PC-9 (cell line): ENCODE measurements at regions of chr14 and their contacts with region 1.

Region 1: DNA sequence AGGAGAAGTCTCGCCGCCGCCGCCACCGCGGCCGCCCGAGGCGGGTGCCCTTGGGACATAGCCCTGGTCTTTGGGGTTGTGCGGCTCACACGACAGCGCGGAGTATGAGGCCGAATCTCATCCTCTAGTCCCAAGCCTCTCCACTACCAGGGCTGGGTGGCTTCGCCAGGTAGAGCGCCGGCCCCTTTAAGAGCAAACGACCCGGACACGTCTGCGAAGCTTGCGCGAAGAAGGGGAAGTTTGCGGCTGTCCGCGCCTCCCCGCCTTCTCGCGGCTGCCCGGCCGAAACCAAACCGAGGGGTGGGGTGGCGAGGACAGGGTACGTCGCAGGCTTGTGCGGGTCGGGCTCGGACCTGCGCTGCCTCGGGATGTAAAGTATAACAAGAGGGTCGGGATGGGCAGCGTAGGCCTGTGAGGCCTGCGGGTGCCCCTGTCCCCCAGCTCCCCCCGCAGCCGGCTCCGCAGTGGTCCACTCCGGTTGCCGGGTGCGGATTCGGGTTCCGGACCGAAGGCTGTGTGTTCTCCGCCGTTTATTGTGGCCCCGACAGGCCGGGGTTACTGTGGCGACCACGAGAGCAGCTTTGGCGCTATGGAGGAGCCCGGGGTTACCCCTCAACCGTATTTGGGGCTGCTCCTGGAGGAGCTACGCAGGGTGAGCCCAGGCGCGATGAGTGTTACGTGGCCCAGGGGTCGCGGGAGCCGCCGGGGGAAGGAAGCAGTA is 33.3 kb downstream of the MIA2 start:
- DNase-seq: peak; percentile 46 to 68
- H3K4me3 ChIP-seq: peak overlapping the region; percentile 84
- H3K27ac ChIP-seq: peak overlapping the region; percentile 92
- H3K4me1 ChIP-seq: peaks cover 21% of the 10 kb centered on the region
- H3K27me3 ChIP-seq: no peaks in the 10 kb centered on the region
- CTCF ChIP-seq: no peak

Region 2: DNA sequence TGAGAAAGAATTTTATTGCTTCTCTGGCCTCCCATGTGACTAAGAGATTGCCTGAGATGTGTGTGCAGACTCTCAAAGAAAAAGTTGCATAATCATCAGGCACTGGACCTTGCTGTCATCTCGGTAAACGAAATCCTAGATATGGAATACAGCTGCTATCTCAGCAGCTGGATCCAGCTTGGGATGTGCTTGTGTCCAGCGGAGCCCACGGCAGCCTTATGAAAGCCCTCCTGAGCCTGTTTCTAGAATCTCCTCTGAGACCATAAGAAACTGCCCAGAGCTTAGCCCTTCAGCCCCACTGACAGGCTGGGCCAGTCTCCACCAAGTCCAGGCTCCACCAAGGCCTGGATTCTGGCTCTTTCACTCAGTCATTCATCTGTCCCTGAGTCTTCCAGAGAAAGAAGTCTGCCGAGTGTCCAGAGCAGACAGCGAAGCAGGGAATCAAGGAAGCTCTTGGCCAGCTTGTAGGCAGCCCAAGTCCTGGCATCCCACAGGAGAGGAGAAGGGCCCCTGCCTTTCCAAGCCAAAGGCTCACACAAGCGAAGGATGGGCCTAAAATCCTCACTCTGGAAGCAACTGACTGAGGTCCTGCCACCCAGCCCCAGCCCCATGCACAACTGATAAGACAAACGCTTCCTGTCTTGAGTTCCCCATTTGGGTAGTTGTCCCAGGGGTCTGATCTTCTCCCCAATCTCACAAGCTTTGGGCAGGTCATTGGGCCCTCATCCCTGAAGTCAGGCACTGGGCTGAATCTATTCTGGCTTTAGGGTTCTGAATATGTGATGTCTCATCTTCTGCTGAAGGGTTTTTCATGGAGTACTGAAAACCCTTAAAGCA is 261.8 kb before region 1 on chr14:
- CTCF ChIA-PET with region 1: no interaction called
- POLR2A ChIA-PET with region 1: no interaction called
- intact Hi-C with region 1: no loop called
- DNase-seq: no peak
- H3K4me3 ChIP-seq: no peak overlapping the region
- H3K27ac ChIP-seq: no peak overlapping the region
- H3K4me1 ChIP-seq: no peaks in the 10 kb centered on the region
- H3K27me3 ChIP-seq: no peaks in the 10 kb centered on the region
- CTCF ChIP-seq: no peak

Region 3: DNA sequence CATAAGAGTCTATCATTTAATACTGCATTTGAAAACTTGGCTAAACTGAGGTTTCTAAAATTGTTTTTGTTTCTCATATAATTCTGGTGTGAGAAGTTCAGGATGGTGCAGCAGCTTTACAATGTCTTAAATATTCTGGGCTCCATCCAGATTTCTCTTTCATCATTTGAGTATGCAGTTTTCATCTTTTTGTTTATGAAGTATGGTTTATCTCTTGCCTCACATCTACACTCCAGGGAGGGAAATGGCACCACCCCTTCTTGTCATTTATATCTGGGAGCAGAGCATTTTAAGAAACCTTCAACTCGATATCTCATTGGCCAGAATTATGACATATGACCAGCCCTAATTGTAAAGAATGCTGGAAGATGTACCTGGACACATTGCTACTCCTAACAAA is 128.6 kb before region 1 on chr14:
- CTCF ChIA-PET with region 1: no interaction called
- POLR2A ChIA-PET with region 1: interaction called, 12 read pairs
- intact Hi-C with region 1: no loop called
- DNase-seq: no peak
- H3K4me3 ChIP-seq: no peak overlapping the region
- H3K27ac ChIP-seq: no peak overlapping the region
- H3K4me1 ChIP-seq: no peaks in the 10 kb centered on the region
- H3K27me3 ChIP-seq: no peaks in the 10 kb centered on the region
- CTCF ChIP-seq: no peak

Region 4: DNA sequence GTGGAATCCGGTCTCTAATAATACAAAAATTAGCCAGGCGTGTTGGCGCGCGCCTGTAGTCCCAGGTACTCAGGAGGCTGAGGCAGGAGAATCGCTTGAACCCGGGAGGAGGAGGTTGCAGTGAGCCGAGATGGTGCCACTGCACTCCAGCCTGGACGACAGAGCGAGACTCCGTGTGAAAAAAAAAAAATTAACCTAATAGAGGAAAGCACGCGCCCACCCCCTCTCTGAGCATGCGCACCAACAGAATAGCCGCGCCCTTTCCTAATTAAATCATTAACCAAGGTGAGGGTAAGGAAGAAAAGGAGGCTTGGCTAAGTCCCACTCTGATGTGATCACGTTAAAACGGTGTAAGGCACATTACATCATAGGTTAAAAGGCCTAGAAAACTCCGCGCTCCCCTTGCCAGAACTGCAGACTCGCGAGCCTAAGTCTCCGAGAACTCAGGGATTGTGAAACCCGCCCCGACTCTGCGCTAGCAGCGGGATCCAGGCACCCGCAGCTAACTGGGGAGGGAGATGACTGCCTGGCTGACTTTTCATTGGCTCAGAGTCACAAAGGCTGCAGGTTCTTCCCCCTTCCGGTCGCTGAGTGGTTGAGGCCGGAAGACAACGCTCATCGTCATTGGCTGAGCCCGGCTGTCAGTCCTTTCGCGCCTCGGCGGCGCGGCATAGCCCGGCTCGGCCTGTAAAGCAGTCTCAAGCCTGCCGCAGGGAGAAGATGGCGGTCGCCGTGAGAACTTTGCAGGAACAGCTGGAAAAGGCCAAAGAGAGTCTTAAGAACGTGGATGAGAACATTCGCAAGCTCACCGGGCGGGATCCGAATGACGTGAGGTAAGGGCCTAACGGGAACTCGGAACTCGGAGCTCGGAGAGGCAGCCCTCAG is 92.2 kb before region 1 on chr14 and contains the start of gene PNN:
- CTCF ChIA-PET with region 1: no interaction called
- POLR2A ChIA-PET with region 1: interaction called, 6 read pairs
- intact Hi-C with region 1: loop called (anchors 2 kb)
- DNase-seq: peak; percentile 92 to 96
- H3K4me3 ChIP-seq: peak within 1 kb of the TSS; percentile 95
- H3K27ac ChIP-seq: peak within 1 kb of the TSS; percentile 95
- H3K4me1 ChIP-seq: peaks cover 21% of the 10 kb centered on the region
- H3K27me3 ChIP-seq: no peaks in the 10 kb centered on the region
- CTCF ChIP-seq: no peak
- total RNA-seq, gene PNN: 65.8 and 72.0 TPM in 2 replicates

Region 5: GRCh38 chr14:39219075-39219499 is 47.9 kb before region 1 on chr14:
- CTCF ChIA-PET with region 1: interaction called, 3 read pairs
- POLR2A ChIA-PET with region 1: interaction called, 3 read pairs
- intact Hi-C with region 1: loop called (anchors 5 kb)
- DNase-seq: peak in 1 of 2 experiments; percentile 41
- H3K4me3 ChIP-seq: 0 out of 2 replicates have a peak overlapping the region, but pooled peaks have one; percentile 14
- H3K27ac ChIP-seq: peak overlapping the region; percentile 93
- H3K4me1 ChIP-seq: peaks cover 32% of the 10 kb centered on the region
- H3K27me3 ChIP-seq: no peaks in the 10 kb centered on the region
- CTCF ChIP-seq: no peak

Region 6: GRCh38 chr14:39432179-39432618 is 165.2 kb after region 1 on chr14 and contains the start of gene FBXO33:
- CTCF ChIA-PET with region 1: no interaction called
- POLR2A ChIA-PET with region 1: no interaction called
- intact Hi-C with region 1: loop called (anchors 5 kb)
- DNase-seq: peak; percentile 74 to 91
- H3K4me3 ChIP-seq: peak within 1 kb of the TSS; percentile 94
- H3K27ac ChIP-seq: peak within 1 kb of the TSS; percentile 96
- H3K4me1 ChIP-seq: peaks cover 8% of the 10 kb centered on the region
- H3K27me3 ChIP-seq: no peaks in the 10 kb centered on the region
- CTCF ChIP-seq: no peak
- total RNA-seq, gene FBXO33: 6.2 and 9.0 TPM in 2 replicates